Panc1 (cell line): ENCODE measurements at regions of chr3 and their contacts with region 1.

Region 1: DNA sequence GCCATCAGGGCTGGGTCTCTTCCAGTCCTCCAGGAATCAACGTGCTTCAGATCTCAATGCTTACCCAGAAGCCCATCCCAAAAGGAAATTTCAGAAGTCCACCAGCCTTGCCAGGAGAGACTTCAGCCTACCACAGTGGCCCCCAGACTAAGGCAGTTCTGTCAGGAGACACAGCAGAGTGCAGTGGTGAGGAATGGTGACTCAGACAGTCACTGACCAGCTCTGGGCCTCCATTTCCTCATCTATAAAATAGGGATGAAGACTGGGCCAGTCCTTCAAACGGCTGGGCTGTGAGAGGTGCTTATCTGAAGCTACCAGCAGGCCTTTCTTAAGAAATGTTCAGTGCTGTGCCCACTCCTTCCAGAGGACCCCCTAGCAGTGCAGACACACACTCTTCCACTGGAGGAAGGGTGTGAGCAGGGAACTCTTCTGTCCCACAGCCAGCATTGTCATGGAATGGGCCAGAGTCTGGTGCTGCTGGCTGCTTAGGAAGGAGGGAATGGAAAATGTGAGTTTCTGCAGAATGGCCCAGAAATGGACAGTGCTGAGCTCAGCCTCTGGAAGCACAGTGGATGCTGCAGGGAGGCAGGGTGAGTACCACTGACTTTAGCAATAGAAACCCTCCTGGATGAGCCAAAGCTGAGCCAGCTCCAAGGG is 41.6 kb upstream of the DUSP7 start:
- DNase-seq: no peak
- ATAC-seq: no peak
- H3K4me3 ChIP-seq: no peak overlapping the region
- H3K27ac ChIP-seq: no peak overlapping the region
- H3K4me1 ChIP-seq: no peaks in the 10 kb centered on the region
- H3K27me3 ChIP-seq: no peaks in the 10 kb centered on the region
- CTCF ChIP-seq: no peak

Region 2: DNA sequence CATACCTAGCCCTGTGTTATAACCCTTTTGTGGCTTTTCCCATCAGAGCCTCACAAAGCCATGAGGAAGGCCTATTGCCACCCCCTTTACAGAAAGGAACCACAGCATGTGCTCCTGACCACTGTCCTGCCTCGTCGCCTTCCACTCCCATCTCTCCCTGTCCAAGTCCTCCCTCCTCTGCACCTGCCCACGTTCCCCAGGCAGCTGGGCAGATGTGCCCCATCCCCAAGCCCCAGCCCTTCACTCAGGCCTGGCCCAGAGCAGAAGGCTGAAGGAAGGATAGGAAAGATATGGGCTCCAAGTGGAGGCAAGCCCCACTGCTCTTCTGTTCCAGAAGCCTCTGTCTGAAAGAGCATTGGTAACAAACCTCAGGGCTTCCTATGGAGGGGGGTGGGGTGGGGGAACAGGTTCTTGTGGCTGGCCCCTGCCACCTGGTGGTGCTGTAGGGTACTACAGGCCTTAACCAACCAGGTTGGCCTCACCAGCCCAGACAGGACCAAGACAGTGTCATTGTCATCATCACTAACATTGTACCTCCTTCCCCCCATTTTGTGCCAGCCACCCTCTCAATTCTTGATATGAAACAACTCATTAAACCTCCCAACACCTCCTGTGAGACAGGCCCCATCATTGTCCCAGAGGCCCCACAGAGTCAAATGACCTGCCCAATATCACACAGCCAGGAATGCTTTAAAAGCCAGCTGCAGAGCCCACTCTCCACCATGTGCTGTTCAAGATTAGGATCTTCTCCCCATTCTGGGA is 46.2 kb after region 1 on chr3:
- CTCF ChIA-PET with region 1: no interaction called
- POLR2A ChIA-PET with region 1: no interaction called
- in situ Hi-C with region 1: no loop called
- intact Hi-C with region 1: no loop called
- DNase-seq: peak; percentile 30
- ATAC-seq: peak; percentile 89
- H3K4me3 ChIP-seq: no peak overlapping the region
- H3K27ac ChIP-seq: peak overlapping the region; percentile 39; the same call in 1 of the 2 replicates
- H3K4me1 ChIP-seq: no peaks in the 10 kb centered on the region
- H3K27me3 ChIP-seq: no peaks in the 10 kb centered on the region
- CTCF ChIP-seq: peak; percentile 88

Region 3: GRCh38 chr3:53030619-53031449 is 932.9 kb after region 1 on chr3:
- CTCF ChIA-PET with region 1: interaction called, 10 read pairs
- POLR2A ChIA-PET with region 1: no interaction called
- in situ Hi-C with region 1: no loop called
- intact Hi-C with region 1: no loop called
- DNase-seq: no peak
- ATAC-seq: no peak
- H3K4me3 ChIP-seq: no peak overlapping the region
- H3K27ac ChIP-seq: no peak overlapping the region
- H3K4me1 ChIP-seq: peaks cover 15% of the 10 kb centered on the region
- H3K27me3 ChIP-seq: no peaks in the 10 kb centered on the region
- CTCF ChIP-seq: no peak